ENCODE measurements at regions of chr6 and their contacts with region 1.

Region 1: GRCh38 chr6:37791156-37791919 is 28.2 kb upstream of the ZFAND3 start:
- DNase-seq: peak; percentile 93
- ATAC-seq: peak; percentile 98

Region 2: GRCh38 chr6:37663019-37663810 is 128.1 kb before region 1 on chr6:
- intact Hi-C with region 1: no loop called
- DNase-seq: no peak
- ATAC-seq: no peak

Region 3: DNA sequence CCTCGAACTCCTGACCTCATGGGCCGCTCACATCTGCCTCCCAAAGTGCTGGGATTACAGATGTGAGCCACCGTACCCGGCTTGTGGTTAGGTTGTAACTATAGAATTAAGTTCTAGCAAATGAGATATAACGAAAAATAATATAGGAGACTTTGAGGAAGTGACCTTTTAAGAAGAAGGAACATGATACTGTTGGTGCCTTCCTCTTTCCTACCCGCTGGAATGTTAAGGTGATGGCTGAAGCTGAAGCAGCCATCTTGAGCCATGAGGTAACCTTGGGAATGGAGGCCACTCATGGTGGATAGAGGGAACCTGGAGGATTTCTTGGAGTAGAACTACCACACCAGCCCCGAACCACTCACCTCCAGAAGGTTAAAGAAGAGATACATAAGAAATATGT is 45.6 kb before region 1 on chr6:
- intact Hi-C with region 1: no loop called
- DNase-seq: no peak
- ATAC-seq: no peak

Region 4: DNA sequence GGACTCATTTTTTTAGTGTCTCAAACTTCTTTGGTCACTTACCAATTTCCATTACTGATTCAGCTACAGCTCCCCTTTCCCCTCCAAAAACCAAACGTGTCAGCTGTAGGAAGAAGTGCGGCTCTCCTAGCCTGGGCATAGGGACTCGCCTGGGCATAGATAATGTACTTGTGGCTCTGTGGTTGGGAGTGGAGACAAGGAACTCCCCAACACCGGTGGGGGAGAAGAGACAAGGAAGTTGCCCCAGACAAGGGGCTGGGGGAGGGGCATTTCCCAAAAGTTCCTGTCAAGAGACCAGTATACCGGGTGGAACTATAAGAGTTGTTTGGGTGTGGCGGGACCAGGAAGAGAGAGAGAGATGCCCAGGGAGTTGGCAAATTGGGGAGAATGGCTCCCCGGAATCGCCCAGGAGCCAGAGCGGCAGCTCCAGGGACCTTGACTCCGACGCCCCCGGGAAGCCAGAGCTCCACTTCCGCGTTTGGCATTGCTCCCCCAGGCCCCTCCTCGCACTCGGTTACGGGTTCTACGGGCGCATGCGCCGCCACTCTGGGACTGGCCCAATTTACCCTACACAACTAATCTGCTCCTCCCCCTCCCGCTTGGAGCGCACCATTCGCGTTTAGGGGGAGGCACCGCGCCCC is 27.3 kb after region 1 on chr6:
- intact Hi-C with region 1: loop called (anchors 1 kb)
- DNase-seq: peak; percentile 98
- ATAC-seq: peak; percentile 92

Region 5: GRCh38 chr6:37860226-37860839 is 69.0 kb after region 1 on chr6:
- intact Hi-C with region 1: loop called (anchors 5 kb)
- DNase-seq: no peak
- ATAC-seq: no peak

Region 6: GRCh38 chr6:38012573-38012972 is 221.2 kb after region 1 on chr6:
- intact Hi-C with region 1: loop called (anchors 2 kb)
- DNase-seq: no peak
- ATAC-seq: peak; percentile 56

Region 7: GRCh38 chr6:38337819-38338465 is 546.6 kb after region 1 on chr6:
- intact Hi-C with region 1: no loop called
- DNase-seq: no peak
- ATAC-seq: no peak

Region 8: DNA sequence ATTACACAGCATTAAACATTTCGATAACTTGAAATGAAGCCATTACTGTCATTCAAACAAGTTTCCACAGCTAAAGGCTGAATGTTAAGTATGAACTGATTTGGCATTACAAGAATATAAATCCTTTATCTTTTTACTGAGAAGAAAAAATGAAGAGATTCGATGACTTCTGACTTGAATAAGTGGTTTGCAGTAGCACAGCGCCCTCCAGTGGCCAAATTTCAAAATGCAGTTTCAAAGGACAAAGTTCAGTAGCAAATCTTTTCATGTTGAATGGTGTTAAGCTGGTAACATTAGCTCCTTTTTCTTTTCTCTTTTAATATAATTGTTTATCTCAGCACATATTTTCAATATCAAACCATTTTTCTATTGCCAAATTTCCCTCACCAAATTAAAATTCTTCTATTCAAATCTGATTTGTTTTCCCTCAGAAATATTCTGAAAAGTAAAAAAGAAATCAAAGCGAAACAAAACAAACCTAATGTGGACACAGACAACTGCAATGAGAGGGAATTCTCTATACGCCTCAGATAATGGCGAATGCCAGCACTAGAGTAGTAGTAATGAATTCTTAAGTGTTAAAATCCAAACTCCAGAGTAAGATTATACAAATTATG is 702.7 kb after region 1 on chr6:
- intact Hi-C with region 1: loop called (anchors 5 kb)
- DNase-seq: no peak
- ATAC-seq: peak; percentile 20